Dorsolateral prefrontal cortex (tissue), 120 donors: ENCODE measurements at regions of chr11 and their contacts with region 1.

Region 1: GRCh38 chr11:131275580-131275979 is 94.8 kb upstream of the NTM start:
- DNase-seq: no peak
- H3K4me3 ChIP-seq: no peak overlapping the region
- H3K27ac ChIP-seq: peak overlapping the region in 28 of 59 donors; percentile 1 to 96 (median 35)
- H3K27me3 ChIP-seq: no peaks in the 10 kb centered on the region
- CTCF ChIP-seq: no peak

Region 2: DNA sequence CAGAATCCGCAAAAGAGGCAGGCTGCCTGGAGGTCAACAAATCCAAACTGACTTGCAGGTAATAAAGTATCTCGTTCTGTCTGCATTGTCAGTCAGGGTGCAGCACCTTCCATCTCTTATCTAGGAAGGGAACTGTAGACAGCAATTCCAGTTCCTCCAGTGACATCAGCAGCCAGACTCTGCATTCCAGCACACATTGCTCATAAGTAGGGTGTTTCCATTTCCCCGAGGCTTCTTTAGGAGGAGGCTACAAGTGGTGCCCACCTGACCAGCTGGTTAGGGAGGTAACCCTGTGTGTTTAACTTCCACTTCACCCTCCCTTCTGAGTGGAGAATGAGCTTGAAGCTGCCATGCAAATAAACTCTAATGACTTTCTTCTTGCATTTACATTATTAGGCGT is 148.1 kb after region 1 on chr11:
- intact Hi-C with region 1: no loop called
- DNase-seq: no peak
- H3K4me3 ChIP-seq: no peak overlapping the region
- H3K27ac ChIP-seq: no peak overlapping the region
- H3K27me3 ChIP-seq: no peaks in the 10 kb centered on the region
- CTCF ChIP-seq: no peak

Region 3: DNA sequence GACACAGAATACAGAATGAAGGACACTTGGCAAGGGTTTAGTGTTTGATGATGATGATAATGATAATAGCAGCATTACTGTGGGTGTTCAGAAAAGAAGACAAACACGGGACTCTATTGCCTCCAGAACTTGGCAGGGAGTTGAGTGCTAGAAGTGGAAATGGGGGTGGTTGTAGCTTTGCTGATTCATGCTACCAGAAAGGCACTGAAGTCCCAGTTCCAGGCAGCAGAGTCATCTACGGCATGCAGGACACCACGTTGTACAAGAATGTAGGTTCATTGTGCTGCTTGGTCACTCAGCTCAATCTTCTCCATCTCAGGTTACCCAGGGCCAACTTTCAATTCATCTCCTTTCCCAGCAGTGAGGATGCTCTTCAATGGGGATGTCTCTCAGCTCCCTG is 210.5 kb after region 1 on chr11:
- intact Hi-C with region 1: loop called in 1 of 2 experiments (anchors 10 kb)
- DNase-seq: peak in 7 of 10 donors; percentile 48 to 72 (median 64)
- H3K4me3 ChIP-seq: no peak overlapping the region
- H3K27ac ChIP-seq: peak overlapping the region in 52 of 59 donors; percentile 5 to 94 (median 78)
- H3K27me3 ChIP-seq: no peaks in the 10 kb centered on the region
- CTCF ChIP-seq: no peak